ENCODE measurements at regions of chr3 and their contacts with region 1.

Region 1: GRCh38 chr3:14921078-14921616 is 26.2 kb upstream of the NR2C2 start:
- DNase-seq: peak; percentile 83 to 97 (median 93)
- H3K4me3 ChIP-seq: no peak overlapping the region
- H3K27ac ChIP-seq: no peak overlapping the region
- H3K4me1 ChIP-seq: peaks cover 0 to 4% of the 10 kb centered on the region in 2 donors
- H3K27me3 ChIP-seq: no peaks in the 10 kb centered on the region
- CTCF ChIP-seq: peak; percentile 95 to 100 (median 99)
- POLR2A ChIP-seq: no peak

Region 2: DNA sequence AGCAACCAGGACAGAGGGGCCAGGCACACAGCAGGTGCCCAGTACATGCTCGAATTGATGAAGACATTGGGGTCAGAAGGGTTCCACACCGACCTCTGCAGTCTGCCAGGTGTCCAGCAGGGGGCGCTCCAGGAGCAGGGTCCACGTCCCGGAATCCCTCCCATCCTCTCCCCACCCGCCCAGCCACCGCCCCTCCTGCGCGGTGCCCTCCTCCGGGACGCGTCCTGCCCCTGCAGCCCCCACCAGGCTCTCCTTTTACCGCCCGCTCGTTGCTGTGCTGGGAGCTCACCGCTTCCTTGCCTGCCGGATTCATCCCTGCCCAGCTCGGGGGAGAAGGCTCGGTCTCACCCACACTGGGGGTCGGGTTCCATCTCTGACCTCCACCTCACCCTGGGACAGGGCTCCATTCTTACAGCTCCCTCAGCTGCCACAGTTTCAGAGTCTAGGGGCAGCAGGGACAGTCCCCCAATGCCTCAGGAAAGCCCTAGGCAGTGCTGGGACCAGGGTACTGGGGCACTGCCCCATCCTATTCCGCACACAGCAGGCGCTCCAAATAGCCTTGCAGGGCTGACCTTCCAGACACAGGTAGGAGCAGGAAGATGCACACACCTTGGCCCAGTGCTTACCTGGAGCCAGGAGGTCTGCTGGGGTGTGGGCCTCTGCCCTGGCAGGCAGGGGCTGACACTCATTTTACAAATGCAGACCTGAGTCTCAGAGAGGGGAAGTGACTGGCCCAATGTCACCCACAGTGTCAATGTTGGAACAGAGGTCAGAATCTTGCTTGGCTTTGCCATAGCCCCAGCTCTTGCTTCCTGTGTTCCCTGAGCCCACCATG is 412.0 kb before region 1 on chr3:
- intact Hi-C with region 1: loop called in 1 of 2 experiments (anchors 10 kb)
- DNase-seq: peak; percentile 28 to 81 (median 64)
- H3K4me3 ChIP-seq: no peak overlapping the region
- H3K27ac ChIP-seq: no peak overlapping the region
- H3K4me1 ChIP-seq: no peaks in the 10 kb centered on the region
- H3K27me3 ChIP-seq: peaks cover 6% of the 10 kb centered on the region
- CTCF ChIP-seq: peak; percentile 62 to 96 (median 78)
- POLR2A ChIP-seq: no peak

Region 3: GRCh38 chr3:14672588-14672987 is 248.6 kb before region 1 on chr3:
- intact Hi-C with region 1: loop called (anchors 5 kb)
- DNase-seq: no peak
- H3K4me3 ChIP-seq: no peak overlapping the region
- H3K27ac ChIP-seq: no peak overlapping the region
- H3K4me1 ChIP-seq: peaks cover 0 to 6% of the 10 kb centered on the region in 2 donors
- H3K27me3 ChIP-seq: no peaks in the 10 kb centered on the region
- CTCF ChIP-seq: no peak
- POLR2A ChIP-seq: no peak

Region 4: DNA sequence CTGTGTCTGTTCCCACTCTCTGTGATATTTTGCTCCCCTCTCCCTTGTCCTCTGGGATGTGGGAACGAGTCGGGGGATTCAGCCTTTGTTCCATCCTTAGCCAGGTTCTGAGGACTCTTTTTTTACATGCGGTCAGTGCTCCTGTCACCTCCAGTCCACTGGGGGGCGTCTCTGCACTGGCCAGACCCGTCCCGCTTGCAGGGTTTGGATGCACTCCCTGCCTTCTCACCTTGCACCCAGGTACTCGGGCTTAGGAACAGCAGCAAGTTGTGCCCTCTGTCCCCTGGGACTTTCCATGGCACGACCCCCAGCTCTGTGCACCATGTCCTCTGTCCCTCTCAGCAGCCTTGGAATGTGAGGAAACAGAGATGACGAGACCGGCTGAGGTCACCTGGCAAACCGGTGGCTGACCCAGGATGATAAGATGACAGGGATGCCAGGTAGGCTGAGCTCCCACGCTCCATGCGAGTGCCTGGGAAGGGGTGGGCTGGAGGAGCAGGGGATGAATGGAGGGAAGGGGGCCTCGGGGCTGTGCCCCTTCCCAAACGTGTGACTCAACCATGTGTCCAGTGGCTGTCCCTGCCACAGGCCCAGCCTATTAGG is 129.7 kb before region 1 on chr3:
- intact Hi-C with region 1: loop called in 1 of 2 experiments (anchors 5 kb)
- DNase-seq: peak; percentile 30 to 82 (median 55)
- H3K4me3 ChIP-seq: no peak overlapping the region
- H3K27ac ChIP-seq: no peak overlapping the region
- H3K4me1 ChIP-seq: no peaks in the 10 kb centered on the region
- H3K27me3 ChIP-seq: no peaks in the 10 kb centered on the region
- CTCF ChIP-seq: peak; percentile 33 to 67 (median 57)
- POLR2A ChIP-seq: no peak

Region 5: DNA sequence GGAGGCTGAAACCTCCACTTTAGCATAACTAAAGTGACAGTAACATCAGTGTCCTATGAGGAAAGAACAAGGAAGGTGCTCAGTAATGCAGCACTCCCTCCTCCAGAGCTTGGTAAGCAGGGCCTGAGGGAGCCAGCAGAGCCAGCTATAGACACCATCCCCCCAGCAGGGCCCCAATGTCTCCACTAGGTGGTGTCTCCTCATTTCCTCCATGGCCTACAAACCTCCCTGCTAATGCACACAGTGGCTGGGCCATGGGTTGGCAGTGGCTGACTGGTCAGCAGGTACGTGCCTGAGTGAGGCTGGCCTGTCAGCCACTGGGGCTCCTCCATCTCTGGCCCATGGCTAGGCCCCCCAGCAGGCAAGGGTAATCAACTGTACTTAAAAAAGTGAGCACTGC is 130.4 kb after region 1 on chr3:
- intact Hi-C with region 1: loop called in 1 of 2 experiments (anchors 10 kb)
- DNase-seq: peak in 6 of 7 donors; percentile 37 to 69 (median 48)
- H3K4me3 ChIP-seq: no peak overlapping the region
- H3K27ac ChIP-seq: no peak overlapping the region
- H3K4me1 ChIP-seq: no peaks in the 10 kb centered on the region
- H3K27me3 ChIP-seq: no peaks in the 10 kb centered on the region
- CTCF ChIP-seq: peak; percentile 27 to 52 (median 46)
- POLR2A ChIP-seq: no peak

Region 6: DNA sequence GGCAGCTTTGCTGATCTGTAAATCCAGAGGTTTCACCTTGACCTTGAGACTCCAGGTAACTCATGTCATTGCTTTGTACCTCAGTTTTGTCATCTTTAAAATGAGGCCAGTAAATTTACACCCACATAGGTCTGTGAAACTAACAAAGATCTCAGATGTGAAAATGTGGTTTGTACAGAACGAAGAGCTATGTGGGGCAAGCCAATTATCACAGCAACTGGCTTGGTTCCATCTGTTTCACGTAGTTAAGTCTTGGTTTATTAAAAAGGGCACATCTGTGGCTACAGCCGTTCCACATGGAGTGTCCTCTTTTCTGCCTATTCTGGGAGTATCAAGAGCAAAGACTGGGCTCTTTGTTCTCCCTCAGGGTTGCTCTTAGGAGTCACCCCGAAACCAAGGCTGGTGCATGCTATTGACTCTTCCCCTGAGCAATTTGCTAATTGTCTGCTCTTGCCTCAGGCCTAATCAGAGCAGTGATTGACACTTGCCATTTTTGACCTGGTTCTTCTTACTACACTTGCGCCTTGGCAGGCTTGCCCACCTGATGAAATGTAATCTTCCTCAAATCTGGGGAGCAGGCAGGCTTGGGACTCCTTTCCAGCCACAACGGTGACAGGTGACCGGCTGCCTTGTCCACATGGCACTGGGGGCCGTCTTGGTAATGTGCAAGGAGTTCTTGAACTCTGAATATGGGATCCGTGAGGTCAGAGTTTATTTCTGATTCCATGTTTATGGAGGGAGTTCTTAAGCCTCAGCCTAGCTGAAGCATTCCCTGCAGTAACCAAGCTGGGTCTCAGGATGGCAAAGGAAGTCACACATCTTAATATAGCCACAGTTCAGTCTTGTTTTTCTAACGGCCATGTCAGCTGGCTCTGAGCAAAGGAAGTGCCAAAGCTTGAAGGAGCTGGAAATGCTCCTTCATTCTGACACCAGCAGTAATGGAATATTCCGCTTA is 546.4 kb after region 1 on chr3:
- intact Hi-C with region 1: no loop called
- DNase-seq: peak in 1 of 7 donors; percentile 41
- H3K4me3 ChIP-seq: no peak overlapping the region
- H3K27ac ChIP-seq: no peak overlapping the region
- H3K4me1 ChIP-seq: no peaks in the 10 kb centered on the region
- H3K27me3 ChIP-seq: no peaks in the 10 kb centered on the region
- CTCF ChIP-seq: no peak
- POLR2A ChIP-seq: no peak